Mammary epithelial cell (primary cell): ENCODE measurements at regions of chr7 and their contacts with region 1.

Region 1: DNA sequence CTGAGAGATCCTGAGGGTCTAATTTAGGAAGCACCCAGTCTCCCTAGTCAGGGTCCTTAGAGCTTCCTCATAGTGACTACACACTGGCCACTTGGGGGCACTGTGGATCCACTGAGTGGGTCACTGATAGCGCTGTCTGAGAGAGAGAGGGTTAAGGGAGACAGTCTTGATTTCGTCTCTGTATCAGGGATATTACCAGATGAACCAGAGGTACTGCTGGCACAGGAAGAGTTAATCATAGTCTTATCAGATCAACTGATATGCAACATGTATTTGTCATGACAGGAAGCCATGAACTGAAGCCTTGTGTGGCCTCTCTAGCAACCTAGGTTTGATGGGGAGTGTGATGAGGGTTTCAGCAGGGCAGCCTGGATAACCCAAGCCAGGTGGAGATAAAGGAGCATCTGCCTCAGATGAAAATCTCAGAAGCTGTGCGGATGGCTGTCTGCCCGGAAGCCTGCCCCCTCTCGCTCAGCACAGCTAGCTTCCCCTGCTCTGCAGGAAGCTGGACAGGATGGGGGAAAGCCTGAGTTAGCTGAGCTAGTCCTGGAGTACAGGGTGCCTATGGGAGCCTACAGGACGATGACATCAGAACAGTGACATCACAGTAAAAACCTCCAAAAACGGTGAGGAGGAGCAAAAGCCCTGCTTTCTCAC is 214.0 kb upstream of the PRSS1 start:
- DNase-seq: peak; percentile 70
- H3K4me3 ChIP-seq: no peak overlapping the region
- H3K27ac ChIP-seq: no peak overlapping the region
- H3K4me1 ChIP-seq: peaks cover 24% of the 10 kb centered on the region
- H3K27me3 ChIP-seq: no peaks in the 10 kb centered on the region
- CTCF ChIP-seq: peak; percentile 94 to 98

Region 2: DNA sequence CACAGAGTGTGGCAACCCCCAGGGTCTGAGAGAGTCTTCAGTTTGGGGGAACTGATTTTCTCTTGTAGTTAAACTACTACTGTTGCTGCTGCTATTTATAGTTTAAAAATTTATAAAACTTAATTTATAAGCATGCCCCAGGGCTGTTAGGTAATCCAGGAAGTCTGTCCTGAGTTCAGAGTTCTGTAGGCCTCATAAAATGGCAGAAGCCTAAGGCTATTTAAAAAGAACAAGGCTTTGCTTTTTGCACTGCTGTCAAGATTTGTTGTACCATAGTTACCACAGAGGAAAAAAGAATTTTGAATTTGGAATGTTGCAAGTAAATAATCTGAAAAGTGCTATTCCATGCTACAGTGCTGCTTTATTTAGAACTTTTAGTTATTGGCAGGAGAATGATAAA is 918.0 kb before region 1 on chr7:
- CTCF ChIA-PET with region 1: no interaction called
- dilution Hi-C with region 1: no loop called
- in situ Hi-C with region 1: no loop called
- intact Hi-C with region 1: no loop called
- DNase-seq: peak; percentile 6
- H3K4me3 ChIP-seq: no peak overlapping the region
- H3K27ac ChIP-seq: no peak overlapping the region
- H3K4me1 ChIP-seq: peaks cover 5% of the 10 kb centered on the region
- H3K27me3 ChIP-seq: no peaks in the 10 kb centered on the region
- CTCF ChIP-seq: no peak

Region 3: GRCh38 chr7:142587578-142588191 is 52.4 kb after region 1 on chr7:
- CTCF ChIA-PET with region 1: interaction called, 7 read pairs
- dilution Hi-C with region 1: no loop called
- in situ Hi-C with region 1: loop called in 1 of 2 experiments (anchors 5 kb)
- intact Hi-C with region 1: loop called (anchors 1 kb)
- DNase-seq: peak; percentile 68
- H3K4me3 ChIP-seq: no peak overlapping the region
- H3K27ac ChIP-seq: no peak overlapping the region
- H3K4me1 ChIP-seq: peaks cover 15% of the 10 kb centered on the region
- H3K27me3 ChIP-seq: no peaks in the 10 kb centered on the region
- CTCF ChIP-seq: peak; percentile 84 to 87

Region 4: GRCh38 chr7:142626420-142627035 is 91.3 kb after region 1 on chr7:
- CTCF ChIA-PET with region 1: no interaction called
- dilution Hi-C with region 1: no loop called
- in situ Hi-C with region 1: no loop called
- intact Hi-C with region 1: loop called (anchors 1 kb)
- DNase-seq: peak; percentile 17
- H3K4me3 ChIP-seq: no peak overlapping the region
- H3K27ac ChIP-seq: no peak overlapping the region
- H3K4me1 ChIP-seq: no peaks in the 10 kb centered on the region
- H3K27me3 ChIP-seq: no peaks in the 10 kb centered on the region
- CTCF ChIP-seq: peak; percentile 53 to 62

Region 5: GRCh38 chr7:142669074-142669654 is 133.9 kb after region 1 on chr7:
- CTCF ChIA-PET with region 1: no interaction called
- dilution Hi-C with region 1: no loop called
- in situ Hi-C with region 1: no loop called
- intact Hi-C with region 1: loop called (anchors 1 kb)
- DNase-seq: peak; percentile 4
- H3K4me3 ChIP-seq: no peak overlapping the region
- H3K27ac ChIP-seq: no peak overlapping the region
- H3K4me1 ChIP-seq: no peaks in the 10 kb centered on the region
- H3K27me3 ChIP-seq: peaks cover under 1% of the 10 kb centered on the region
- CTCF ChIP-seq: peak; percentile 25 to 28

Region 6: DNA sequence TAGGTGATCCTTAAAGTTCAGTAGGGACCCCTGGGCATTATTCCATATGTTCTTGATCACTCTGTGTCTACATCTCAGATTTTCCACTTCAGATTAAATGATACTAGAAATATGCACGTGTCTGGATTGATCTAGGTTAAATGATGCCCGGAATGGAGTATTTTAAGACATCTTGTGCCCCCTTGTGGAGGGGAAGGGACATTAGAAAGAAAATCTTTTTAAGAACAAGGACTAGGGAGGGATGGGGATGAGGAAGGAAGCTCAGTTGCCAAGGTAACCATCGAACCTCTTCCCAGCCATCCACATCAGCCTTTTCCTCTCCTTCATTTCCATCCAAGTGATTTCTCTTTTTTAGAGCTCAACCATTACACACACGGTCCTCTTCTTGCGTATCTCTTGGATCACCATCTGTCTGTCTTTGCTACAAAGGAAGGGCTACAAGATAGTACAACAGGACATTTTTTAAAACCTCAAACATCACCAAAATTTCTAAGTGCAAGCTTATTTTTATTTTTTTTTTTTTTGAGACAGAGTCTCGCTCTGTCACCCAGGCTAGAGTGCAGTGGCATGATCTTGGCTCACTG is 276.0 kb after region 1 on chr7:
- CTCF ChIA-PET with region 1: no interaction called
- dilution Hi-C with region 1: no loop called
- in situ Hi-C with region 1: no loop called
- intact Hi-C with region 1: loop called (anchors 1 kb)
- DNase-seq: peak; percentile 31
- H3K4me3 ChIP-seq: no peak overlapping the region
- H3K27ac ChIP-seq: no peak overlapping the region
- H3K4me1 ChIP-seq: no peaks in the 10 kb centered on the region
- H3K27me3 ChIP-seq: no peaks in the 10 kb centered on the region
- CTCF ChIP-seq: peak; percentile 64 to 65

Region 7: GRCh38 chr7:142898377-142899170 is 363.3 kb after region 1 on chr7:
- CTCF ChIA-PET with region 1: no interaction called
- dilution Hi-C with region 1: no loop called
- in situ Hi-C with region 1: no loop called
- intact Hi-C with region 1: no loop called
- DNase-seq: no peak
- H3K4me3 ChIP-seq: no peak overlapping the region
- H3K27ac ChIP-seq: no peak overlapping the region
- H3K4me1 ChIP-seq: no peaks in the 10 kb centered on the region
- H3K27me3 ChIP-seq: peaks cover 4% of the 10 kb centered on the region
- CTCF ChIP-seq: no peak